ENCODE measurements at regions of chr12 and their contacts with region 1.

Region 1: DNA sequence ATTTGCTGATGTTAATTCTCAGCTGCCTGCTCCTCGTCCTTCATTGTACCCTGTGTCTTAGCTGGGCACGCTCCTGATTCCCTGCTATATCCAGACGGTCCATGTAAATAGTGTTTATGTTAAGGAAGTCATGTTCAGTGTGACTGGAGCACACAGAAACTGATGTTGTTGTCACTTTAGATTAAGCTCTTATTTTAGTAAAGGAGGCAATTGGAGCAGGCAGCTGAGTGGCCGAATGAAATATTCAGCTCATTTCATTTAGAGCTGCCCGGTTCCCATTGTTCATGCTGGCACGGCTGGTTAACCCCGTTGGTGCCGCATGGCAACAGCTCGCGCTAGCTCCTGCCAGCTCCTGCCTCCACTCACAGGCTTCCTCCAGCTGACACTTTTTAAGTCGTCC is 446.8 kb upstream of the SOX5 start:
- DNase-seq: no peak
- H3K4me3 ChIP-seq: no peak overlapping the region
- CTCF ChIP-seq: no peak
- POLR2A ChIP-seq: no peak

Region 2: GRCh38 chr12:23611320-23611719 is 784.9 kb before region 1 on chr12:
- intact Hi-C with region 1: no loop called
- DNase-seq: no peak
- H3K4me3 ChIP-seq: no peak overlapping the region
- CTCF ChIP-seq: no peak
- POLR2A ChIP-seq: no peak

Region 3: GRCh38 chr12:24252602-24253001 is 143.6 kb before region 1 on chr12:
- intact Hi-C with region 1: no loop called
- DNase-seq: no peak
- H3K4me3 ChIP-seq: no peak overlapping the region
- CTCF ChIP-seq: no peak
- POLR2A ChIP-seq: no peak

Region 4: DNA sequence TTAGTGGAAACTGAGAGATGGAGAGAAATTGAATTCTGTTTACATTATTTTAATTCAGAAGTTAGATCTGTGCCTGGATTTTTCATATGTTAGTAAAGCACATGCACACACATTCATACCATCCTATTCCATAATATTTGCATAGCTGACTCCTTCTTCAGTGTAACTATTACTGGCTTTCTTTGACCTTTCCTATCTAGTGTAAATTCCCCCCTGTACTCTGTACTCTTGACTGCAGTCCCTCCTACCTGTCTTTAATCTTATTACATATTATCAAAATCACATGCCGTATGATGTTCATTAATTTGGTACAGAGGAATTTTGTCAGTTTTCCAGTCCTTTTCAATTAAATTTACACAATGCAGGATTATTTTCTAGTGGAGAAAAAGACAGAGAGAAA is 29.7 kb before region 1 on chr12:
- intact Hi-C with region 1: loop called (anchors 2 kb)
- DNase-seq: no peak
- H3K4me3 ChIP-seq: no peak overlapping the region
- CTCF ChIP-seq: no peak
- POLR2A ChIP-seq: no peak

Measured in lower leg skin (tissue), 4 donors.